MCF 10A (cell line): ENCODE measurements at regions of chr12 and their contacts with region 1.

Region 1: DNA sequence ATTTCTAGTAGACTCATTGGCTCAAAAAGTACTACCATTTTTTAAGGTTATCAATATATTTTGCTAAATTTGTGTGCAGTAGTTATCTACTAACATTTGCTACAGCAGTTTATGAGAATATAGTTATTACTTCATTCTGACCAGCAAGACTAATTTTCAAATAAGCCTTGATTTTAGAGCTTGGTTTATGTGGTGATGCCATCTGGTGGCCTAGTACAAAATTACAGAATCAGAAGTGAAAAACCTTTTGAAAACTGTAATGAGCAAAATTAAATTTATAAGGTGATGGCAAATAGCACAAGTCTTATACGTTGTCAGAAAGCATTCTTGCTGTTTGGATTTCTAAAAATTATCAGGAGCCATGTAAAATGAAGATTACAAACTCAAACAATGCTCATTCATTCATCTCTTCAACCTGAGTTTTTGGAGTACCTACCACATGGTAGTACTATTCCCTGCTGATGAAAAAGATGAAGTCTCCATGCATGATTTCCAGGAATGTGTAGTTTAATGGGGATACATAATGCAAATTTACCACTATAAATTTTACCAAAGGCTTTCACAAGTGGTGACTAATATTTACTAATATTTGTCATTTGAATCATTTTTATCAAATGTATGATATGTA is 51.0 kb downstream of the MAGOHB start:
- DNase-seq: peak; percentile 61
- H3K4me3 Mint-ChIP-seq: no peak overlapping the region
- H3K27ac Mint-ChIP-seq: no peak overlapping the region
- H3K4me1 Mint-ChIP-seq: peaks cover 6% of the 10 kb centered on the region
- H3K27me3 Mint-ChIP-seq: no peaks in the 10 kb centered on the region
- CTCF ChIP-seq: peak; percentile 61

Region 2: DNA sequence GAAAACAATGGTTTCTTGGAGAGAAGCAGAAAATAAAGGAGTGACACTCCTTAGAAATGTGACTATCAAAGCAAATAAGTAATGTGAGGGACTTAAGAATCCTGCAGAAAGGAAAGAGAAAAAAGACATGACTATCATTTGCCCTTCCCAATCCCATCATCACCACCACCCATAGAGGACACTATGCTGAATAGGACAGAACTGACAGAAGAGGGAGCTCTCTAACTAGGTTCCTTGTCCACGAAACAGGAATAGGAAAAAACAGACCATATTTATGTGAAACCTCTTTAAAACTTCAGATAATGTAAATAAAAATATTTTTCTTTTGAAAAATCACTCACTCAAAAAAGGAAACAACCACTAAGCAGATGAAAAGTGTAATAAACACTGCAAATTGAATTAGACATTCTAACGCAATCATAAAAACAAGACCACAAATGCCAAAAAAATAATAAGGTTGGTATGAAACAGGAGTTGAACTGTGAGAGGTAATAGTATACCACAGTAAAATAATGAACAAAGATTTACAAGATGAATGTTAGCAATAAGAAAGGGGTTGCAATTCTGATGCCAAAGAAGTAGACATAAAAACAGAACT is 230.7 kb before region 1 on chr12:
- CTCF ChIA-PET with region 1: interaction called, 18 read pairs
- POLR2A ChIA-PET with region 1: no interaction called
- intact Hi-C with region 1: loop called (anchors 1 kb)
- DNase-seq: peak; percentile 72
- H3K4me3 Mint-ChIP-seq: no peak overlapping the region
- H3K27ac Mint-ChIP-seq: no peak overlapping the region
- H3K4me1 Mint-ChIP-seq: peaks cover 22% of the 10 kb centered on the region
- H3K27me3 Mint-ChIP-seq: no peaks in the 10 kb centered on the region
- CTCF ChIP-seq: peak; percentile 63

Region 3: GRCh38 chr12:10501031-10501430 is 61.4 kb before region 1 on chr12:
- CTCF ChIA-PET with region 1: interaction called, 4 read pairs
- POLR2A ChIA-PET with region 1: no interaction called
- intact Hi-C with region 1: loop called (anchors 1 kb)
- DNase-seq: peak; percentile 26
- H3K4me3 Mint-ChIP-seq: no peak overlapping the region
- H3K27ac Mint-ChIP-seq: no peak overlapping the region
- H3K4me1 Mint-ChIP-seq: peaks cover 6% of the 10 kb centered on the region
- H3K27me3 Mint-ChIP-seq: no peaks in the 10 kb centered on the region
- CTCF ChIP-seq: peak; percentile 65

Region 4: DNA sequence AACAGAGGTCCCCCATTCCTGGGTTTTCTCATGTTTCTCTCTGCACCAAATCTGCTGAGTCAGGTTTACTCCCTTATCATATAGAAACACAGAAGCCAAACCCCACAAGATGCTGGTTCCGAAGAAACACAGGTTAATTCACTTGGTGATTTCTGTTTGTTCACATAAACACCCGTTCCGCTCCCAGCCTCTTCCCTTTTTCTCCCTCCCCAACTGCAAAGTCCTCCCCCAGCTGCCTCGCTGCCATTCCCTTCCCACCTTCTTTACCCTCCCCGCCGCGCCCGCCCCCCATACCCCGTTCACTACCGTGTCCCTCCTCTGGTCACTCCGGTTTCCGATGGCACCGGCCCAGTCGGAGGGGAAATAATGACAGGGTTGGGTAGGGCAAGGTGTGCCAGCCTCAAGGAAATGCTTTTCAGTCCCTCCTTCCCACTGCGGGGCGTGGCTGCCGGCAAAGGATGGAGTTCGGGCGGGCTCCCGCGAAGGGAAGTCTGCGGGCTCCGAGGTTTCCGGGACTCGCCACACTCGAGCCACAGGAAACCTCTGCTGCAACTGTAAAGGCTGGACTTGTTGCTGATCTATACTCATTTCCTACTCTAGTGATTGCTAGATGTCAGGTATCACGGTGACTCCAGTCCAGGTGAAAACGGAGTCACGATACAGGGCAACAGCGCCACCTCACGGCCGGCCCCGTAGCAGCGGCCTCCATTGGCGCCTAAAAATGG is 111.4 kb after region 1 on chr12 and contains the start of gene STYK1:
- CTCF ChIA-PET with region 1: no interaction called
- POLR2A ChIA-PET with region 1: no interaction called
- intact Hi-C with region 1: loop called (anchors 1 kb)
- DNase-seq: peak; percentile 72
- H3K4me3 Mint-ChIP-seq: peak within 1 kb of the TSS; percentile 74
- H3K27ac Mint-ChIP-seq: no peak within 1 kb of the TSS
- H3K4me1 Mint-ChIP-seq: no peaks in the 10 kb centered on the region
- H3K27me3 Mint-ChIP-seq: no peaks in the 10 kb centered on the region
- CTCF ChIP-seq: peak; percentile 96
- total RNA-seq, gene STYK1: 0.14 and 0.56 TPM in 2 replicates